ENCODE measurements at regions of chr15 and their contacts with region 1.

Region 1: DNA sequence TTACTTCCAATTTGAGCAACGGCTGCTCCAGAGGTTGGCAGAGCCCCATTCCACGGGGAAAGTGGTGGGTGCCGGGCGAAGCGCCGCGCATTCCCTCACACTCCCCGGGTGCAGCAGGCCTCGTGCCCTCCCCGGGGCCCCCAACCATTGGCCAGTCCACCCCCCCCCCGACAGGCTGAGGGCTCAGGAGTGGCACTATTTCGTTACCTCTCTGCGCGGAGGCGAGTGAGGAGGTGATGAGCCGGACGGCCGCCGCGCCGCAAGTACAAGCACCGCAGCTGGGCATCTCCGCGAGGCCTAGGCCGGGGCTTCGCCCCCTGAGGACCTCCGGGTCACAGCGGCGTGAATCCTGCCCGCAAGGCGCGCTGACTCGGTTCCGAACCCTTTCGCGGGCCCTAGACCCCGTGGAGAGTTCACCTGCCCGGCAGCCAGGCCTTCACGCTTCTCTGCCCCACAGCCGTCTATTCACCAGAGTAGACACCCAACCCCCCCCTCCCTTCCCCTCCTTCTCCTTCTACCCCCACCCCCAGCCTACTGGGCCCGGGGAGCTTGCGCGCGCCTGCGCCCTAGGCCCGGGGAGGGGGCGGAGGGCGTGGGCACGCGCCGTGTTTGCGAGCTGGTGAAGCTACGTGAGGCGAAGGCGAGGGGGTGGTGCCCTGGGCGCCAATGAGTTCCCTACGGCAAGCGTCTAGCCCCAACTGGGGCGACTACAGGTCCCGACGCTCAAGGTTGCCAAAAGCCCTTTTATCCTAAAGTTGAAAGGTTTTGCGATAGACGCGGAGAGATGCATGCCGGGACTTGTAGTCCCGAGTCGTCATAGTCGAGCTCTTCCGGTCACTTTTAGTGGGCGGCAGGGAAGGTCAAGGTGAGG is at the start of gene CLPX:
- DNase-seq: peak; percentile 95
- ATAC-seq: peak; percentile 93
- H3K4me3 Mint-ChIP-seq: peak within 1 kb of the TSS; percentile 92
- H3K27ac Mint-ChIP-seq: peak within 1 kb of the TSS; percentile 89
- H3K4me1 Mint-ChIP-seq: peaks cover 28% of the 10 kb centered on the region
- H3K27me3 Mint-ChIP-seq: no peaks in the 10 kb centered on the region
- total RNA-seq, gene CLPX: 65.2 to 73.7 TPM

Region 2: GRCh38 chr15:64841258-64842095 is 343.6 kb before region 1 on chr15 and contains the start of gene PLEKHO2:
- CTCF ChIA-PET with region 1: no interaction called
- POLR2A ChIA-PET with region 1: no interaction called
- intact Hi-C with region 1: no loop called
- DNase-seq: peak; percentile 94
- ATAC-seq: peak; percentile 73
- H3K4me3 Mint-ChIP-seq: peak within 1 kb of the TSS; percentile 88
- H3K27ac Mint-ChIP-seq: peak within 1 kb of the TSS; percentile 84
- H3K4me1 Mint-ChIP-seq: peaks cover 66% of the 10 kb centered on the region
- H3K27me3 Mint-ChIP-seq: no peaks in the 10 kb centered on the region
- total RNA-seq, gene PLEKHO2: 11.4 to 13.3 TPM

Region 3: GRCh38 chr15:65133548-65134200 is 51.4 kb before region 1 on chr15 and contains the start of gene PDCD7:
- CTCF ChIA-PET with region 1: interaction called, 4 read pairs
- POLR2A ChIA-PET with region 1: no interaction called
- intact Hi-C with region 1: loop called (anchors 1 kb)
- DNase-seq: peak; percentile 91
- ATAC-seq: peak; percentile 96
- H3K4me3 Mint-ChIP-seq: peak within 1 kb of the TSS; percentile 85
- H3K27ac Mint-ChIP-seq: peak within 1 kb of the TSS; percentile 93
- H3K4me1 Mint-ChIP-seq: peaks cover 26% of the 10 kb centered on the region
- H3K27me3 Mint-ChIP-seq: no peaks in the 10 kb centered on the region
- total RNA-seq, gene PDCD7: 16.6 to 24.8 TPM

Region 4: GRCh38 chr15:65275728-65276126 is 90.6 kb after region 1 on chr15:
- CTCF ChIA-PET with region 1: interaction called, 3 read pairs
- POLR2A ChIA-PET with region 1: no interaction called
- intact Hi-C with region 1: loop called in 1 of 2 experiments (anchors 1 kb)
- DNase-seq: no peak
- ATAC-seq: peak; percentile 20
- H3K4me3 Mint-ChIP-seq: no peak overlapping the region
- H3K27ac Mint-ChIP-seq: peak overlapping the region; percentile 86
- H3K4me1 Mint-ChIP-seq: peaks cover 37% of the 10 kb centered on the region
- H3K27me3 Mint-ChIP-seq: no peaks in the 10 kb centered on the region

Region 5: GRCh38 chr15:65298731-65299130 is 113.6 kb after region 1 on chr15:
- CTCF ChIA-PET with region 1: interaction called, 12 read pairs
- POLR2A ChIA-PET with region 1: interaction called, 31 read pairs
- intact Hi-C with region 1: loop called (anchors 1 kb)
- DNase-seq: peak; percentile 21
- ATAC-seq: no peak
- H3K4me3 Mint-ChIP-seq: peak overlapping the region; percentile 81
- H3K27ac Mint-ChIP-seq: peak overlapping the region; percentile 97
- H3K4me1 Mint-ChIP-seq: peaks cover 49% of the 10 kb centered on the region
- H3K27me3 Mint-ChIP-seq: no peaks in the 10 kb centered on the region

Region 6: GRCh38 chr15:65516997-65517865 is 332.1 kb after region 1 on chr15 and contains the start of gene DPP8:
- CTCF ChIA-PET with region 1: no interaction called
- POLR2A ChIA-PET with region 1: no interaction called
- intact Hi-C with region 1: loop called in 1 of 2 experiments (anchors 1 kb)
- DNase-seq: peak; percentile 97
- ATAC-seq: peak; percentile 97
- H3K4me3 Mint-ChIP-seq: peak within 1 kb of the TSS; percentile 91
- H3K27ac Mint-ChIP-seq: peak within 1 kb of the TSS; percentile 88
- H3K4me1 Mint-ChIP-seq: peaks cover 36% of the 10 kb centered on the region
- H3K27me3 Mint-ChIP-seq: no peaks in the 10 kb centered on the region
- total RNA-seq, gene DPP8: 25.8 to 26.4 TPM